Activated B cell treated with CpG ODN at 0.5 μM for 24 hours (primary cell): ENCODE measurements at regions of chr20 and their contacts with region 1.

Region 1: DNA sequence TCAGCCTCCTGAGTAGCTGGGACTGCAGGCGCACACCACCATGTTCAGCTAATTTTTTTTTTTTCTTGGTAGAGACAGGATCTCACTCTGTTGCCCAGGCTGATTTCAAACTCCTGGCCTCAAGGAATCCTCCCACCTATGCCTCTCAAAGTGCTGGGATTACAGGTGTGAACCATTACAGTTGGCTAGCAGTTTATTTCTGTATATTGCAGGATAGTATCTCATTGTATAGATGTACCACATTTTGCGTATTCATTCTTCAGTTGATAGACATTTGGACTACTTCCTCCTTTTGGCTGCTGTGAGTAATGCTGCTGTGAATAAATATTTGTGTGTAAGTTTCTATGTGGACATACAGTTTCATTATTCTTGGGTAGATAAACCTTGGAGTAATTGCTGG is 32.9 kb downstream of the ASXL1 start:
- DNase-seq: no peak
- ATAC-seq: peak; percentile 71
- H3K4me3 Mint-ChIP-seq: no peak overlapping the region
- H3K27ac Mint-ChIP-seq: peak overlapping the region; percentile 6
- H3K4me1 Mint-ChIP-seq: peaks cover 30% of the 10 kb centered on the region
- H3K27me3 Mint-ChIP-seq: no peaks in the 10 kb centered on the region
- CTCF ChIP-seq: no peak

Region 2: GRCh38 chr20:32411955-32412706 is 21.1 kb after region 1 on chr20:
- CTCF ChIA-PET with region 1: no interaction called
- POLR2A ChIA-PET with region 1: no interaction called
- intact Hi-C with region 1: loop called (anchors 2 kb)
- DNase-seq: no peak
- ATAC-seq: peak; percentile 80
- H3K4me3 Mint-ChIP-seq: peak overlapping the region; percentile 57
- H3K27ac Mint-ChIP-seq: peak overlapping the region; percentile 42
- H3K4me1 Mint-ChIP-seq: peaks cover 57% of the 10 kb centered on the region
- H3K27me3 Mint-ChIP-seq: no peaks in the 10 kb centered on the region
- CTCF ChIP-seq: no peak

Region 3: GRCh38 chr20:32465092-32465900 is 74.3 kb after region 1 on chr20:
- CTCF ChIA-PET with region 1: no interaction called
- POLR2A ChIA-PET with region 1: no interaction called
- intact Hi-C with region 1: no loop called
- DNase-seq: no peak
- ATAC-seq: no peak
- H3K4me3 Mint-ChIP-seq: no peak overlapping the region
- H3K27ac Mint-ChIP-seq: no peak overlapping the region
- H3K4me1 Mint-ChIP-seq: peaks cover 11% of the 10 kb centered on the region
- H3K27me3 Mint-ChIP-seq: no peaks in the 10 kb centered on the region
- CTCF ChIP-seq: no peak